GM10248 (cell line): ENCODE measurements at regions of chr18 and their contacts with region 1.

Region 1: GRCh38 chr18:63320046-63320689 is 599 bp upstream of the BCL2 start:
- DNase-seq: peak; percentile 88
- CTCF ChIP-seq: peak; percentile 38

Region 2: GRCh38 chr18:63119647-63120046 is 200.5 kb before region 1 on chr18:
- CTCF ChIA-PET with region 1: interaction called, 19 read pairs
- POLR2A ChIA-PET with region 1: interaction called, 3 read pairs
- DNase-seq: no peak
- CTCF ChIP-seq: peak; percentile 48

Region 3: GRCh38 chr18:63155169-63155852 is 164.9 kb before region 1 on chr18:
- CTCF ChIA-PET with region 1: interaction called, 61 read pairs
- POLR2A ChIA-PET with region 1: interaction called, 4 read pairs
- DNase-seq: peak; percentile 62
- CTCF ChIP-seq: peak; percentile 90

Region 4: GRCh38 chr18:63186520-63187222 is 133.5 kb before region 1 on chr18:
- CTCF ChIA-PET with region 1: interaction called, 17 read pairs
- POLR2A ChIA-PET with region 1: no interaction called
- DNase-seq: no peak
- CTCF ChIP-seq: no peak

Region 5: GRCh38 chr18:63292831-63293683 is 27.1 kb before region 1 on chr18:
- CTCF ChIA-PET with region 1: interaction called, 18 read pairs
- POLR2A ChIA-PET with region 1: no interaction called
- DNase-seq: peak; percentile 48
- CTCF ChIP-seq: no peak

Region 6: GRCh38 chr18:63378919-63379638 is 58.9 kb after region 1 on chr18:
- CTCF ChIA-PET with region 1: no interaction called
- POLR2A ChIA-PET with region 1: no interaction called
- DNase-seq: peak; percentile 28
- CTCF ChIP-seq: no peak

Region 7: DNA sequence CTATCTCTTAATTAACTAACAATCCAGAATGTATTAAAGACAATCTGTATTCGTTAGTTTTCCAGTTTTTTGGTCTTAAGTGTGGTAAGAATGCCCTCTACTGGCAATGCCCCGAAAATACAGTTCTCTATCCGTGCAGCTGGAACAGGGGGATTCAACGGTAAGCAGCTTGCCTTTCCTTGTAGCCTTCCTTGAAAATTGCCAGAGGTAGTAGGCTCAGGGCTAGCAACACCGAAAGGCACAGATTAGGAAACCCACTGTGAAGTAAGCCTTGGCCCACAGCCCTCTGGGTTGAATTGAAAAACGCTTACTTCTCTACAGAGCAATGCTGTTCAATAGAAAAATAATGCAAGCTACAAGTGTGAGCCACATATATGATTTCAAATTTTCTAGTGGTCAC is 119.2 kb after region 1 on chr18:
- CTCF ChIA-PET with region 1: interaction called, 13 read pairs
- POLR2A ChIA-PET with region 1: no interaction called
- DNase-seq: peak; percentile 63
- CTCF ChIP-seq: peak; percentile 85